ENCODE measurements at regions of chr4 and their contacts with region 1.

Region 1: GRCh38 chr4:52659001-52659721 is at the start of gene USP46:
- DNase-seq: peak; percentile 84 to 94 (median 94)
- ATAC-seq: peak; percentile 95 to 96
- H3K4me3 ChIP-seq: peak within 1 kb of the TSS; percentile 97
- H3K27ac ChIP-seq: peak within 1 kb of the TSS; percentile 98
- H3K4me1 ChIP-seq: peaks cover 8% of the 10 kb centered on the region
- H3K27me3 ChIP-seq: no peaks in the 10 kb centered on the region
- total RNA-seq, gene USP46: 51.1 to 63.7 (median 59.5) TPM

Region 2: GRCh38 chr4:52545099-52546069 is 113.8 kb before region 1 on chr4:
- intact Hi-C with region 1: loop called in 1 of 4 experiments (anchors 10 kb)
- DNase-seq: peak; percentile 75 to 92 (median 84)
- ATAC-seq: peak; percentile 87 to 91
- H3K4me3 ChIP-seq: peak overlapping the region; percentile 23
- H3K27ac ChIP-seq: no peak overlapping the region
- H3K4me1 ChIP-seq: no peaks in the 10 kb centered on the region
- H3K27me3 ChIP-seq: no peaks in the 10 kb centered on the region

Region 3: GRCh38 chr4:52588097-52588782 is 70.9 kb before region 1 on chr4:
- intact Hi-C with region 1: loop called in 1 of 4 experiments (anchors 10 kb)
- DNase-seq: peak; percentile 37 to 74 (median 58)
- ATAC-seq: peak; percentile 45 to 66
- H3K4me3 ChIP-seq: no peak overlapping the region
- H3K27ac ChIP-seq: peak overlapping the region; percentile 69
- H3K4me1 ChIP-seq: peaks cover 11% of the 10 kb centered on the region
- H3K27me3 ChIP-seq: no peaks in the 10 kb centered on the region

Region 4: GRCh38 chr4:52670739-52671138 is 11.6 kb after region 1 on chr4:
- intact Hi-C with region 1: no loop called
- DNase-seq: no peak
- ATAC-seq: no peak
- H3K4me3 ChIP-seq: no peak overlapping the region
- H3K27ac ChIP-seq: no peak overlapping the region
- H3K4me1 ChIP-seq: no peaks in the 10 kb centered on the region
- H3K27me3 ChIP-seq: no peaks in the 10 kb centered on the region

Region 5: GRCh38 chr4:52711834-52712171 is 52.6 kb after region 1 on chr4:
- intact Hi-C with region 1: no loop called
- DNase-seq: no peak
- ATAC-seq: peak in 1 of 2 donors; percentile 3
- H3K4me3 ChIP-seq: peak overlapping the region; percentile 26
- H3K27ac ChIP-seq: peak overlapping the region; percentile 62
- H3K4me1 ChIP-seq: peaks cover 4% of the 10 kb centered on the region
- H3K27me3 ChIP-seq: no peaks in the 10 kb centered on the region

Measured in right cardiac atrium (tissue), 5 donors.